ENCODE measurements at regions of chr7 and their contacts with region 1.

Region 1: GRCh38 chr7:88615336-88615735 is 144.2 kb upstream of the ZNF804B start:
- DNase-seq: no peak
- ATAC-seq: no peak
- H3K4me3 ChIP-seq: no peak overlapping the region
- H3K27ac ChIP-seq: no peak overlapping the region
- H3K4me1 ChIP-seq: no peaks in the 10 kb centered on the region
- H3K27me3 ChIP-seq: no peaks in the 10 kb centered on the region
- CTCF ChIP-seq: no peak
- POLR2A ChIP-seq: no peak

Region 2: DNA sequence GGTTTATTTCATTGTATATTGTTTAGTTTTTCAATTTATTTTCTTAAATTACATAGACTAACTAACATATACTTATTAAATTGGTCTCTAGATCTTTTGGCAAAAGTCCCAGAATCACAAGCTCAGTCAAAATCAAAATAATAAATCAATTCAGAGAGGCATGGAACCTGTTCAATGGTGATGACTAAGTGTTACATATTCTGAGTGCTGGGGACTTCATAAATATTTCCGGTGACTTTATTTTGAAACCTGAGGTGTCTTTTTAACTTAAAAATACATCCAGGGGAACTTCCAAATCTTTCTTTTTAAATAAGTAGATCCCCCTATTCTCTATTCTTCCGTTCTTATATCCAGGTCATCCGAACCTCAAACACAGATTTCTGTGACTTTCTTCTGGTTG is 54.6 kb after region 1 on chr7:
- intact Hi-C with region 1: loop called in 1 of 10 experiments (anchors 10 kb)
- DNase-seq: no peak
- ATAC-seq: no peak
- H3K4me3 ChIP-seq: no peak overlapping the region
- H3K27ac ChIP-seq: no peak overlapping the region
- H3K4me1 ChIP-seq: no peaks in the 10 kb centered on the region
- H3K27me3 ChIP-seq: no peaks in the 10 kb centered on the region
- CTCF ChIP-seq: no peak
- POLR2A ChIP-seq: no peak

Region 3: DNA sequence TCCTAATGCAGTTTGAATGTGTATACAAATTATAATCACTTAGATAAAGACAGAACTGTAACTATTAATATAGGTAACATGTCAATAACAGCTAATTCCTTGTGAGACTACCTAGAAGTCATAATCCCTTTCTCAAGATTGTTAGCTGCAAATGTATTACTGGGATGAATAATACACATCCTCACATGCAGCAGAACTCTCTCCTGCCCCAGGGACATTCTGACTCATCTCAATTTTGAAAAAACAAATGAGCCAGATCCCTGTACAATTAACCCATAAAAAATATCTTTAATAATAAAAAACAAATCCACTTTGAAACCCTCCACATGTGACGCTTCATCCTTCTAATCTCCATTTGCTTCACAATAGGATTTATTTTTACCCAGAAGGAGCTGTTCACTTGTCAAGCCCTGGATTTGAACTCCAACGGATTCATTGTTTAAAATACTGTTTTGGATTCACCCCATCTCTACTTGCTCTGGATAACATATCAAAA is 608.6 kb after region 1 on chr7:
- intact Hi-C with region 1: no loop called
- DNase-seq: no peak
- ATAC-seq: no peak
- H3K4me3 ChIP-seq: no peak overlapping the region
- H3K27ac ChIP-seq: no peak overlapping the region
- H3K4me1 ChIP-seq: no peaks in the 10 kb centered on the region
- H3K27me3 ChIP-seq: no peaks in the 10 kb centered on the region
- CTCF ChIP-seq: no peak
- POLR2A ChIP-seq: no peak

Measured in heart left ventricle (tissue), 16 donors.